CD4-positive, alpha-beta T cell (primary cell): ENCODE measurements at regions of chr20 and their contacts with region 1.

Region 1: DNA sequence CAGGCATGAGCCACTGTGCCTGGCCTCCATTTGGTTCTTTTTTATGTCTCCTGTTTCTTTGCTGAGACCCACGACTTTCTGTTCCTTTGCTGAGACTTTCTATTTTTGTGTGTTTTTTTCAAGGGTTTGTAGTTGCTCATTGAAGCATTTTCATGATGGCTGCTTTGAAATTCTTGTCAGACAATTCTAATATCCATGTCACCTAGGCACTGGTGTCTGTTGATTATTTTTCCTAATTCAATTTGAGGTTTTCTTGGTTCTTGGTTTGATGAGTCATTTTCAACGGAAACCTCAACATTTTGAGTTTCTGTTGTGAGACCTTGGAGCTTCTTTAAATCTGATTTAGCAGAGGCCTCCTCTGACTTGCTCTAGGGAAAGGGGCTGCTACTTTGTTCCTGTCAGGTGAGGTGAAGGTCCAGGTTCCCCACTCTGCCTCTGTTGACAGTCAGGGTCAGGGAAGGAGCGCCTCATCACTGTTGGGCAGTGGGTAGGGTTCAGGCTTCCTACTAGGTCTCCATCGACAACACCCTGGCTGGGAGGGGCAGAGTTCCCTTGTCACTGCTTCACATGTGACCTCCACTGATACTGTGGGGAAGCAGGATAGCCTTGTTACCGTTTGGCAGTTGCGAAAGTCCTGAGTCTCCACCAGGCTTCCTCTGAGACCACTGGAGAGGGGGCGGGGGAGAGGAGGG is 67.2 kb upstream of the RNF24 start:
- DNase-seq: peak; percentile 15 to 80 (median 38)
- ATAC-seq: peak; percentile 69
- H3K4me3 ChIP-seq: peak overlapping the region; percentile 28
- H3K4me3 Mint-ChIP-seq: peak overlapping the region; percentile 0
- H3K27ac ChIP-seq: peak overlapping the region in 1 of 2 donors; percentile 72
- H3K27ac Mint-ChIP-seq: peak overlapping the region; percentile 72
- H3K4me1 ChIP-seq: peaks cover 38% of the 10 kb centered on the region
- H3K4me1 Mint-ChIP-seq: peaks cover 42% of the 10 kb centered on the region
- H3K27me3 ChIP-seq: no peaks in the 10 kb centered on the region
- H3K27me3 Mint-ChIP-seq: no peaks in the 10 kb centered on the region
- CTCF ChIP-seq: no peak

Region 2: GRCh38 chr20:3753098-3753980 is 329.2 kb before region 1 on chr20:
- CTCF ChIA-PET with region 1: no interaction called
- POLR2A ChIA-PET with region 1: no interaction called
- intact Hi-C with region 1: loop called in 1 of 2 experiments (anchors 2 kb)
- DNase-seq: peak; percentile 45 to 83 (median 56)
- ATAC-seq: peak; percentile 64
- H3K4me3 ChIP-seq: no peak overlapping the region
- H3K4me3 Mint-ChIP-seq: peak overlapping the region; percentile 92
- H3K27ac ChIP-seq: no peak overlapping the region
- H3K27ac Mint-ChIP-seq: peak overlapping the region; percentile 70
- H3K4me1 ChIP-seq: peaks cover 13% of the 10 kb centered on the region
- H3K4me1 Mint-ChIP-seq: peaks cover 14% of the 10 kb centered on the region
- H3K27me3 ChIP-seq: peaks cover 0 to 7% of the 10 kb centered on the region in 2 experiments
- H3K27me3 Mint-ChIP-seq: no peaks in the 10 kb centered on the region
- CTCF ChIP-seq: peak; percentile 60

Region 3: GRCh38 chr20:3995067-3995748 is 87.3 kb before region 1 on chr20:
- CTCF ChIA-PET with region 1: interaction called, 12 read pairs
- POLR2A ChIA-PET with region 1: no interaction called
- intact Hi-C with region 1: no loop called
- DNase-seq: peak in 4 of 14 experiments; percentile 29 to 54 (median 40)
- ATAC-seq: peak; percentile 51
- H3K4me3 ChIP-seq: no peak overlapping the region
- H3K4me3 Mint-ChIP-seq: peak overlapping the region; percentile 2
- H3K27ac ChIP-seq: no peak overlapping the region
- H3K27ac Mint-ChIP-seq: peak overlapping the region; percentile 22
- H3K4me1 ChIP-seq: peaks cover 23% of the 10 kb centered on the region
- H3K4me1 Mint-ChIP-seq: peaks cover 54% of the 10 kb centered on the region
- H3K27me3 ChIP-seq: no peaks in the 10 kb centered on the region
- H3K27me3 Mint-ChIP-seq: no peaks in the 10 kb centered on the region
- CTCF ChIP-seq: no peak

Region 4: GRCh38 chr20:4038047-4038459 is 44.5 kb before region 1 on chr20:
- CTCF ChIA-PET with region 1: interaction called, 4 read pairs
- POLR2A ChIA-PET with region 1: interaction called, 11 read pairs
- intact Hi-C with region 1: loop called (anchors 2 kb)
- DNase-seq: peak; percentile 67 to 96 (median 78)
- ATAC-seq: peak; percentile 100
- H3K4me3 ChIP-seq: peak overlapping the region; percentile 29
- H3K4me3 Mint-ChIP-seq: peak overlapping the region; percentile 74
- H3K27ac ChIP-seq: peak overlapping the region; percentile 37 to 66
- H3K27ac Mint-ChIP-seq: peak overlapping the region; percentile 86
- H3K4me1 ChIP-seq: peaks cover 25% of the 10 kb centered on the region
- H3K4me1 Mint-ChIP-seq: peaks cover 17% of the 10 kb centered on the region
- H3K27me3 ChIP-seq: no peaks in the 10 kb centered on the region
- H3K27me3 Mint-ChIP-seq: no peaks in the 10 kb centered on the region
- CTCF ChIP-seq: no peak

Region 5: GRCh38 chr20:4171538-4172116 is 89.1 kb after region 1 on chr20:
- CTCF ChIA-PET with region 1: no interaction called
- POLR2A ChIA-PET with region 1: no interaction called
- intact Hi-C with region 1: no loop called
- DNase-seq: peak in 3 of 14 experiments; percentile 6 to 20 (median 19)
- ATAC-seq: no peak
- H3K4me3 ChIP-seq: peak overlapping the region; percentile 69
- H3K4me3 Mint-ChIP-seq: peak overlapping the region; percentile 76
- H3K27ac ChIP-seq: peak overlapping the region in 1 of 2 donors; percentile 34
- H3K27ac Mint-ChIP-seq: peak overlapping the region; percentile 70
- H3K4me1 ChIP-seq: peaks cover 21% of the 10 kb centered on the region
- H3K4me1 Mint-ChIP-seq: peaks cover 29% of the 10 kb centered on the region
- H3K27me3 ChIP-seq: no peaks in the 10 kb centered on the region
- H3K27me3 Mint-ChIP-seq: no peaks in the 10 kb centered on the region
- CTCF ChIP-seq: no peak

Region 6: DNA sequence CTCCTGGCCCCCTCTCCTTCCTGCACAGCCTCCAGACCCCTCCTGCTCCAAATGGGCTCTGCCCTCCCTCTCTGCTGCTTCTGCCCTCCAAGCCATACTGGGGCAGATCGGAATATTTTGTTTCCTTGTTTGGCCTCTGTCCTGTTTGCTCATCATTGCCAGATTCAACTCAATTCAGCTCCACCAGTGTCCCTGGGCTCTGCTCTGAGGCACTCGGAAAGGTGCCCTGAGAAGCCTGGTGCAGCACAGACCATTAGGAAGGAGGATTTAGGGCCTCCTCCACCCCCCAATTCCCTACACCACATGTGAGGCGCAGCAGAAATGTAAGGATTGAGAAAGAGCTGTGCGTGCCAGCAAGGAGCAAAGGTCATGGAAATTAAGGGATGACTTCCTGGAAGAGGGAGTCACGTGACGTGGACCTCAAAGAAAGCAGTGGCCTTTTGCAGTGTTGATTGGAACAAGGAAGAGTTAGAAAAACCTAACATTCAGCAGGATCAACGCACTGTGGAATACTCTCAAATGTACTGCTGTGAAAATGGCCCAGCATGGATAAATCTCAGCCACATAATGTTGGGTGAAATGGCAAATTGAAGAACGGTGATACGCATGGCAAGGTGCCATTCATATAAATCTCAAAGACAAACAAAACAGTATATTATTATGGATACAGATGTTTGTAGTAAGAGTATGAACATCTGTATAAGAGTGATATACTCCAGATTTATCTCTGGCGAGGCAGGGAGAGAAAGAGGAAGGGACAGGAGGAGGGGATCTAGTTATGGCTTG is 162.3 kb after region 1 on chr20:
- CTCF ChIA-PET with region 1: no interaction called
- POLR2A ChIA-PET with region 1: no interaction called
- intact Hi-C with region 1: no loop called
- DNase-seq: no peak
- ATAC-seq: no peak
- H3K4me3 ChIP-seq: no peak overlapping the region
- H3K4me3 Mint-ChIP-seq: no peak overlapping the region
- H3K27ac ChIP-seq: no peak overlapping the region
- H3K27ac Mint-ChIP-seq: no peak overlapping the region
- H3K4me1 ChIP-seq: no peaks in the 10 kb centered on the region
- H3K4me1 Mint-ChIP-seq: peaks cover 4% of the 10 kb centered on the region
- H3K27me3 ChIP-seq: peaks cover 22 to 61% of the 10 kb centered on the region in 2 experiments
- H3K27me3 Mint-ChIP-seq: peaks cover 62% of the 10 kb centered on the region
- CTCF ChIP-seq: no peak